ENCODE measurements at regions of chr6 and their contacts with region 1.

Region 1: GRCh38 chr6:53326372-53327016 is 22.3 kb downstream of the ELOVL5 start:
- DNase-seq: peak; percentile 89 to 97
- H3K4me3 ChIP-seq: peak overlapping the region; percentile 42; the same call in 1 of the 2 replicates
- H3K27ac ChIP-seq: peak overlapping the region; percentile 85
- H3K4me1 ChIP-seq: peaks cover 53% of the 10 kb centered on the region
- H3K27me3 ChIP-seq: no peaks in the 10 kb centered on the region
- CTCF ChIP-seq: no peak

Region 2: GRCh38 chr6:53179961-53180651 is 146.4 kb before region 1 on chr6:
- CTCF ChIA-PET with region 1: interaction called, 15 read pairs
- POLR2A ChIA-PET with region 1: no interaction called
- intact Hi-C with region 1: no loop called
- DNase-seq: no peak
- H3K4me3 ChIP-seq: no peak overlapping the region
- H3K27ac ChIP-seq: no peak overlapping the region
- H3K4me1 ChIP-seq: no peaks in the 10 kb centered on the region
- H3K27me3 ChIP-seq: no peaks in the 10 kb centered on the region
- CTCF ChIP-seq: no peak

Region 3: GRCh38 chr6:53302678-53303360 is 23.7 kb before region 1 on chr6:
- CTCF ChIA-PET with region 1: no interaction called
- POLR2A ChIA-PET with region 1: interaction called, 12 read pairs
- intact Hi-C with region 1: loop called (anchors 1 kb)
- DNase-seq: peak in 1 of 2 experiments; percentile 92
- H3K4me3 ChIP-seq: peak overlapping the region; percentile 34
- H3K27ac ChIP-seq: peak overlapping the region; percentile 87
- H3K4me1 ChIP-seq: peaks cover 45% of the 10 kb centered on the region
- H3K27me3 ChIP-seq: no peaks in the 10 kb centered on the region
- CTCF ChIP-seq: no peak

Region 4: GRCh38 chr6:53348371-53349208 is 22.1 kb after region 1 on chr6 and contains the start of gene ELOVL5:
- CTCF ChIA-PET with region 1: interaction called, 7 read pairs
- POLR2A ChIA-PET with region 1: interaction called, 3 read pairs
- intact Hi-C with region 1: loop called (anchors 1 kb)
- DNase-seq: peak; percentile 81 to 93
- H3K4me3 ChIP-seq: peak within 1 kb of the TSS; percentile 73
- H3K27ac ChIP-seq: peak within 1 kb of the TSS; percentile 54
- H3K4me1 ChIP-seq: peaks cover 20% of the 10 kb centered on the region
- H3K27me3 ChIP-seq: no peaks in the 10 kb centered on the region
- CTCF ChIP-seq: no peak
- total RNA-seq, gene ELOVL5: 71.3 and 108 TPM in 2 replicates

Measured in PC-9 (cell line).